CD8-positive, alpha-beta T cell (primary cell): ENCODE measurements at regions of chr1 and their contacts with region 1.

Region 1: DNA sequence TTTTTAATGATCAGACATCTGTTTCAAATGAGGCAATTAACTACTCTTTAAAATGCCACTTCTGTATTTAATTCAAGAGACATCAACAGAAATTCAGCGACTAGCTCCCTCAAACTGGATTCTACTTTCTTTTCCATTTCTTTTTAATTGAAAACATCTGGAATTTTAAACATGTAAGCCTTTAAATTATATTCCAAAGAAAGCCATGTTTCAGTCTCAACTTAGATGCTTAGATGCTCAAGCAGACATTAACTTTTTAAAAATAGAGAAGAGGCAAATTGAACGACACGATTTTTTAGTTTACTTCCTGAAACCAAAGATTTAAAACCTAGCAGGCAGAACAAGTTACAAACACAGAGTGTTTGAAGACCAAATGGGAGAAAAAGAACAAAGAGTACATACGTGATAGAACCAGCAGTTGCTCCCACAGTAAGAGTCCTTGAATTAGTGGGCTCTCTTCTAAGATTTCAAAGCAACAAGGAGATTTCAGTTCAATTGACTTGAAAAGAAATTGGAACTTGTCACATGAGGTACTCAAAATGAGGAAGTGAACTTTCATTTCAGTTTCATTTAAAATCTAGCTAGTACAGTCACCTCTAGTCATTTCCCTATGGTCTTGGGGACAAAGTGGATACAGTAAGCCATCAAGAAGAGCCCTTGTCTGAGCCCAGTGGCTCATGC is at the start of gene CTSS:
- DNase-seq: peak in 2 of 9 experiments; percentile 39 to 66
- ATAC-seq: peak; percentile 64
- H3K4me3 ChIP-seq: peak within 1 kb of the TSS; percentile 47 to 69
- H3K4me3 Mint-ChIP-seq: peak within 1 kb of the TSS; percentile 94
- H3K27ac ChIP-seq: peak within 1 kb of the TSS; percentile 67 to 75
- H3K27ac Mint-ChIP-seq: peak within 1 kb of the TSS; percentile 95
- H3K4me1 ChIP-seq: peaks cover 25% of the 10 kb centered on the region
- H3K4me1 Mint-ChIP-seq: peaks cover 42% of the 10 kb centered on the region
- H3K27me3 ChIP-seq: no peaks in the 10 kb centered on the region
- H3K27me3 Mint-ChIP-seq: no peaks in the 10 kb centered on the region
- CTCF ChIP-seq: no peak
- total RNA-seq, gene CTSS: 58.3 to 63.0 TPM

Region 2: DNA sequence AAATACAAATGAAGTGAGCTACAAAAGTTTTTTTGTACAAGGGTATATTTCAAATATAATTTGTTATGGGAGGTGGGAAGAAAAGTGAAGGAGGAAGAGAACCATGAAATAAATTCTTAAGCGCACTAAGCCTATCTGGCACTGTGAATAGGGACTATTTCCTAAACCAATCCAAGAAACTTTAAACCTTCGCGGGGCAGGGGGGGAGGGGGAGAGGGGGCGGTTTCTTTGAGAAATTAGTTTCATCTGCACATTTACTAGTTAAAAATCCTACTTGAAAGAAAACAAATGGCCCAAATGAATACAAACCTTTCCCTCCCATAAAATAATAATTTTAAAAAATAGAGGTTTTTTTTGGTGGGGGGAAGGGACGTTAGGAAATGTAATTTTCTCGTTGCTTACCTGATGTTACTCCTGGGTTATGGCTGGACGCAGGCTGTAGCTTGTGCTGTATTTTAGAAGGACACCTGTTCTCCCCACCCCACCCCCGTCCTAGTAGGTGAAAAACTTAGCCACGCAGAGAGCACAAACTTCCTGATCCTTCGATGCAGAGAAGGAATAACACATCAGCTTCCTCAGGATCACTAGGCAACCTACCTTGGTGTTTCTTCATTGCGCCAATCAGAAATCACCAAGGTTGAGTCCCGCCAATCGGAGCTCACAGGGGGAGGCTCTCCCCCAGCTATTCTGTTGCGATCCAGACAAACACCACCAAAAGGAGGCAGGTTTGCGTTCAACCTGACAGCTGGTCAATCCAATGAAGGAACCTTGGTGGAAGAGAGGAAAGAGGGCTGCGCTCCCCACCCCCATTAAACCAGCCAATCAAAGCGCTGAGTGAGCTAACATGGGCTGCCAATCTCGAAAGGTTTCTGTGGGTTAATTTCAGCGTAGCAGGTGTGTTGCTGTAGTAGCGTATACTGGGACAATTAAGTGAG is 68.6 kb before region 1 on chr1 and contains the start of gene GOLPH3L:
- CTCF ChIA-PET with region 1: no interaction called
- POLR2A ChIA-PET with region 1: no interaction called
- intact Hi-C with region 1: loop called in 1 of 2 experiments (anchors 2 kb)
- DNase-seq: peak; percentile 76 to 97 (median 88)
- ATAC-seq: peak; percentile 98
- H3K4me3 ChIP-seq: peak within 1 kb of the TSS; percentile 81 to 88
- H3K4me3 Mint-ChIP-seq: peak within 1 kb of the TSS; percentile 98
- H3K27ac ChIP-seq: peak within 1 kb of the TSS; percentile 70 to 81
- H3K27ac Mint-ChIP-seq: peak within 1 kb of the TSS; percentile 92
- H3K4me1 ChIP-seq: peaks cover 7% of the 10 kb centered on the region
- H3K4me1 Mint-ChIP-seq: peaks cover 38% of the 10 kb centered on the region
- H3K27me3 ChIP-seq: no peaks in the 10 kb centered on the region
- H3K27me3 Mint-ChIP-seq: peaks cover 2% of the 10 kb centered on the region
- CTCF ChIP-seq: no peak
- total RNA-seq, gene GOLPH3L: 1.6 to 1.8 TPM